Gastrocnemius medialis (tissue), 4 donors: ENCODE measurements at regions of chr14 and their contacts with region 1.

Region 1: GRCh38 chr14:63795532-63795931 is 57.3 kb upstream of the SYNE2 start:
- DNase-seq: no peak
- ATAC-seq: no peak
- H3K4me3 ChIP-seq: no peak overlapping the region
- H3K27ac ChIP-seq: no peak overlapping the region
- H3K4me1 ChIP-seq: peaks cover 0 to 8% of the 10 kb centered on the region in 2 donors
- H3K27me3 ChIP-seq: no peaks in the 10 kb centered on the region
- CTCF ChIP-seq: no peak
- POLR2A ChIP-seq: no peak

Region 2: DNA sequence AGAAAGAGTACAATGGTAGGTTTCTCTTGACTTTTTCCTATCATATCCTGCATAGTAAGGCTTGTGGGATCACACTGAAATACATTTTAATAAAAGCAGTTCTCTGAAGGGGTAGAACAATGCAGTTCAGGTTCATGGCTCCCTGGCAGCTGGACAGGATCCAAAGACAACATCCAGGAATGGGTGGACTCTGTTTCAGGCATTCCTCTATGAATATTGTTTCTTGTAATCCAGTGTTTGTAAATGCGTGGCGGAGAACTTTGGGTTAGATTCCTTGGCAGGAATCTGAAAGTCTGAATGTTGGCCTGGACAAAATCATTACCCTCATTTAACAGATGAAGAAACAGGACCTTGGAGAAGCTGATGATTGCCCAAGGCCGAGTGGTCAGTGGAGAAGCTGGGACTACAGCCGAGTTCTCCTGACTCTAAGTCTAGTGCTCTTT is 100.8 kb after region 1 on chr14:
- in situ Hi-C with region 1: no loop called
- intact Hi-C with region 1: no loop called
- DNase-seq: peak; percentile 11 to 30
- ATAC-seq: peak; percentile 50 to 51
- H3K4me3 ChIP-seq: no peak overlapping the region
- H3K27ac ChIP-seq: peak overlapping the region; percentile 38 to 70 (median 50)
- H3K4me1 ChIP-seq: peaks cover 47 to 63% of the 10 kb centered on the region in 2 donors
- H3K27me3 ChIP-seq: no peaks in the 10 kb centered on the region
- CTCF ChIP-seq: no peak
- POLR2A ChIP-seq: no peak

Region 3: DNA sequence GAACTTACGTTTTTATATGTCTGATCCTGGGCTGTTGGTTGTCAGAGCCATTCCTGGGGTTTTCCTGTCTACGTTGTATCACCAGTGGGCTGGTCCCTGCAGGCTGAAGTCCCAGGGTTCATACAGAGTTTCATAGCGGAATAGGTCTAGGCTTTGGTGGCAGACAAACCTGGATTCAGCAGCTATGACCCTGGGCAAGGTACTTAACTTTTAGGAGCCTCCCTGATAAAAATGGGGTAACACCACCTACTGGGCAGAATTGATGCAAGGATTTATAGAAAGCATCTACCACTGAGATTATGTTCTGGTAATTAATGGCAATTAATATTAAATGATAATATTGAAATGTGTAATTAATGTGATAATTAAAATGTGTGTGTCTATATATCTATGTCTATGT is 198.5 kb after region 1 on chr14:
- in situ Hi-C with region 1: loop called in 1 of 4 experiments (anchors 10 kb)
- intact Hi-C with region 1: no loop called
- DNase-seq: no peak
- ATAC-seq: no peak
- H3K4me3 ChIP-seq: no peak overlapping the region
- H3K27ac ChIP-seq: no peak overlapping the region
- H3K4me1 ChIP-seq: no peaks in the 10 kb centered on the region
- H3K27me3 ChIP-seq: no peaks in the 10 kb centered on the region
- CTCF ChIP-seq: peak in 1 of 5 experiments; percentile 21
- POLR2A ChIP-seq: no peak